ENCODE measurements at regions of chr1 and their contacts with region 1.

Region 1: DNA sequence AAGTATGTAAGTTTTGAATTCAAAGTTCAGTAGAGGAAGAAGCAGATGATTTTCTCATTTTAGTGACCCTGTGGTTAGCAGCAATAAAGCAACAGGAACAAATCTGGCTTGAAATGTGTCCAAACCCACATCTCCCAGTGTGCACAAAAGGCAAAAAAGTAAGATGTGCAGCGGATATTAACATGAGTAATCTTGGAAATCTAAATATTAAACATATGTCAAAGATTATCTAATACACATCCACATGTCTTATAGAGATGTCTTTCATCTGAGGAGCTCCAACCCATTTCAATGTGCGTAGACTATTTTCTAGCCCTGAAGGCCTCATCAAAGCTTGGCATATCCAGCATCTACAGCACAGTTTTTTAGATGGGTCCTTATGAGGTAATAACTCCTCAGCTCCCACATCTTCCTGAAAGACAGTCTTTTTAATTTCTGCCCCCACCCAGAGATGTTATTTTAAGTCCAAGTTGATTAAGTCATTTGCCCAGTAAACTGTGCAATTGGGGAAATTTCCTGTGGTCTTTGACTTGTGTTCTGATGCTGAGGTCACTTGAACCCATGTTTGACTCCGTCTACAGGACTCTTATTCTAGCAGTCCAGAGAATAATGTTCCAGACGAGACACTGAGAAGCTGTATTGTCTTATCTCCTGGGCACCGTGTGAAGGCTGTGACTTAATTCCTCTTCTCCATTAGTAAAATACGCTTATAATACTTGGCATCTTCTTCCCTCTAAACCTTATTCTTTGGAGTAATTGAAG is 73.7 kb downstream of the LMO4 start:
- DNase-seq: no peak

Region 2: GRCh38 chr1:87335175-87335884 is 67.1 kb before region 1 on chr1:
- intact Hi-C with region 1: loop called (anchors 10 kb)
- DNase-seq: peak; percentile 12 to 84 (median 68)

Region 3: GRCh38 chr1:87508247-87508787 is 105.9 kb after region 1 on chr1:
- intact Hi-C with region 1: no loop called
- DNase-seq: no peak